Tibial artery (tissue), 4 donors: ENCODE measurements at regions of chr1 and their contacts with region 1.

Region 1: GRCh38 chr1:11645670-11646265 is 8.5 kb downstream of the FBXO2 start:
- DNase-seq: peak; percentile 55 to 80
- H3K4me3 ChIP-seq: no peak overlapping the region
- H3K27ac ChIP-seq: no peak overlapping the region
- H3K4me1 ChIP-seq: peaks cover 0 to 34% (median 22%) of the 10 kb centered on the region in 4 donors
- H3K27me3 ChIP-seq: peaks cover 0 to 65% of the 10 kb centered on the region in 2 donors
- CTCF ChIP-seq: peak; percentile 55 to 68

Region 2: GRCh38 chr1:11044849-11045427 is 600.8 kb before region 1 on chr1:
- intact Hi-C with region 1: loop called (anchors 5 kb)
- DNase-seq: peak in 1 of 2 donors; percentile 44
- H3K4me3 ChIP-seq: no peak overlapping the region
- H3K27ac ChIP-seq: no peak overlapping the region
- H3K4me1 ChIP-seq: no peaks in the 10 kb centered on the region
- H3K27me3 ChIP-seq: peaks cover 0 to 21% of the 10 kb centered on the region in 2 donors
- CTCF ChIP-seq: no peak

Region 3: GRCh38 chr1:11248155-11248554 is 397.6 kb before region 1 on chr1:
- intact Hi-C with region 1: loop called (anchors 5 kb)
- DNase-seq: no peak
- H3K4me3 ChIP-seq: no peak overlapping the region
- H3K27ac ChIP-seq: no peak overlapping the region
- H3K4me1 ChIP-seq: no peaks in the 10 kb centered on the region
- H3K27me3 ChIP-seq: no peaks in the 10 kb centered on the region
- CTCF ChIP-seq: no peak

Region 4: DNA sequence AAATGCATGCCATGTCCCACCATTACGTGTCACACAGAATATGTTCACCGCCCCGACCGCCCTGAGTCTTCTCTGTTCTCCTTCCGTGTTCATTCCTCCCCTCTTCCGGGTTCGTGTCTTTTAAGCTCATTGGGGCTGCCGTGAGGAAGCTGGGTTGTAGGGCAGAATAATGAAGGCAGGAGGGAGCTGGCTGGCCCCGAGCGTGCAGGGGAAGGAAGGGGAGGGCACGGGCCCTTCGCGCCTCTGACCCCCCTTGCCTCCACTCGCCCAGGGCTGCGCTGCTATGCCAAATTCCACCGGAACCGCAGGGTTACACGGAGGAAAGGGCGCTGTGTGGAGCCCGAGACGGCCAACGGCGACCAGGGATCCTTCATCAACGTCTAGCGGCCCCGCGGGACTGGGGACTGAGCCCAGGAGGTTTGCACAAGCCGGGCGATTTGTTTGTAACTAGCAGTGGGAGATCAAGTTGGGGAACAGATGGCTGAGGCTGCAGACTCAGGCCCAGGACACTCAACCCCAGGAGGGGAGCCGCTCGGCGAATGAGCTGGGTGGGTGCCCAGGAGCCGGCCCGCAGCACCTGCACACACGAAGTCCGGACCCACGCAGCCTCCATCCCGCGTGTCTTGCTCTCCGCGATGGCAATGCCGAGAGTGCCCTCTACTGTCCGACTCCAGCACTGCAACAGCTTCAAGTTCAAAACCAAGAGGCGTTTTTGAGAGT is 73.7 kb after region 1 on chr1:
- intact Hi-C with region 1: loop called (anchors 2 kb)
- DNase-seq: peak; percentile 85 to 89
- H3K4me3 ChIP-seq: peak overlapping the region; percentile 38 to 44
- H3K27ac ChIP-seq: peak overlapping the region in 1 of 2 donors; percentile 10
- H3K4me1 ChIP-seq: peaks cover 4 to 11% (median 6%) of the 10 kb centered on the region in 4 donors
- H3K27me3 ChIP-seq: peaks cover 0 to 34% of the 10 kb centered on the region in 2 donors
- CTCF ChIP-seq: peak; percentile 87 to 98

Region 5: GRCh38 chr1:11805447-11806306 is 159.9 kb after region 1 on chr1 and contains the starts of genes CLCN6 and MTHFR:
- intact Hi-C with region 1: loop called (anchors 10 kb)
- DNase-seq: peak; percentile 99 to 100
- H3K4me3 ChIP-seq: peak within 1 kb of the TSS; percentile 72 to 74
- H3K27ac ChIP-seq: peak within 1 kb of the TSS; percentile 97
- H3K4me1 ChIP-seq: peaks cover 0 to 68% (median 46%) of the 10 kb centered on the region in 4 donors
- H3K27me3 ChIP-seq: no peaks in the 10 kb centered on the region
- CTCF ChIP-seq: peak in 1 of 2 experiments; percentile 12

Region 6: GRCh38 chr1:11858968-11859871 is 213.5 kb after region 1 on chr1:
- intact Hi-C with region 1: no loop called
- DNase-seq: no peak
- H3K4me3 ChIP-seq: no peak overlapping the region
- H3K27ac ChIP-seq: no peak overlapping the region
- H3K4me1 ChIP-seq: peaks cover 0 to 9% (median 2%) of the 10 kb centered on the region in 4 donors
- H3K27me3 ChIP-seq: peaks cover 0 to 70% of the 10 kb centered on the region in 2 donors
- CTCF ChIP-seq: peak in 1 of 2 experiments; percentile 28